Naive thymus-derived CD4-positive, alpha-beta T cell (primary cell): ENCODE measurements at regions of chr6 and their contacts with region 1.

Region 1: DNA sequence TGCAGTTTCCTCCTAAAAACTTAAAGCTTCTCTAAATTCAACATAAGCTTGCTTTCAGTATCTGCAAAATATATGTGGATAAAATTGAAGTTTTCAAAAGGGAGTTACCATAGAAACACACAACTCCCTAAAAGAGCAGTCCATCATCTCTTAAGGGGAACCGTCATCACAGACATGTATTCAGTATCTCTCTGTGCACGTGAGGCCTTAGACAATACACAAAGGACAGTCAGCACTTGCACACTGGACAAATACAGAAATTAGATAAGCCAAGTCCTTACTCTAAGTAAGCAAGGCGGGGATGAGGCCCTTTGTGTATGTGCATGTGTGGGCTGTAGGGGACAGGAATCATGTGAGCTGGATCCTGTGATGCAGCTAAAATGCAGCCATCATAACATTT is 136.6 kb downstream of the BACH2 start:
- DNase-seq: no peak
- ATAC-seq: peak; percentile 41
- H3K4me3 ChIP-seq: no peak overlapping the region
- H3K4me3 Mint-ChIP-seq: peak overlapping the region in 9 of 10 donors; percentile 3 to 73 (median 48)
- H3K27ac ChIP-seq: peak overlapping the region; percentile 28
- H3K27ac Mint-ChIP-seq: peak overlapping the region in 8 of 9 donors; percentile 84 to 94 (median 92)
- H3K4me1 ChIP-seq: peaks cover 8 to 77% of the 10 kb centered on the region in 2 donors
- H3K4me1 Mint-ChIP-seq: peaks cover 18 to 96% (median 83%) of the 10 kb centered on the region in 7 donors
- H3K27me3 ChIP-seq: no peaks in the 10 kb centered on the region
- H3K27me3 Mint-ChIP-seq: no peaks in the 10 kb centered on the region

Region 2: GRCh38 chr6:90121982-90122381 is 38.0 kb before region 1 on chr6:
- CTCF ChIA-PET with region 1: interaction called, 4 read pairs
- POLR2A ChIA-PET with region 1: interaction called, 9 read pairs
- intact Hi-C with region 1: loop called in 1 of 2 experiments (anchors 5 kb)
- DNase-seq: no peak
- ATAC-seq: peak; percentile 14
- H3K4me3 ChIP-seq: no peak overlapping the region
- H3K4me3 Mint-ChIP-seq: peak overlapping the region in 7 of 10 donors; percentile 15 to 70 (median 49)
- H3K27ac ChIP-seq: no peak overlapping the region
- H3K27ac Mint-ChIP-seq: peak overlapping the region in 8 of 9 donors; percentile 21 to 92 (median 85)
- H3K4me1 ChIP-seq: peaks cover 0 to 16% of the 10 kb centered on the region in 2 donors
- H3K4me1 Mint-ChIP-seq: peaks cover 17 to 91% (median 86%) of the 10 kb centered on the region in 7 donors
- H3K27me3 ChIP-seq: no peaks in the 10 kb centered on the region
- H3K27me3 Mint-ChIP-seq: no peaks in the 10 kb centered on the region

Region 3: GRCh38 chr6:90144396-90144795 is 15.6 kb before region 1 on chr6:
- CTCF ChIA-PET with region 1: interaction called, 3 read pairs
- POLR2A ChIA-PET with region 1: interaction called, 5 read pairs
- intact Hi-C with region 1: loop called in 1 of 2 experiments (anchors 1 kb)
- DNase-seq: peak in 1 of 9 donors; percentile 57
- ATAC-seq: no peak
- H3K4me3 ChIP-seq: no peak overlapping the region
- H3K4me3 Mint-ChIP-seq: peak overlapping the region in 3 of 10 donors; percentile 14 to 32 (median 15)
- H3K27ac ChIP-seq: no peak overlapping the region
- H3K27ac Mint-ChIP-seq: peak overlapping the region in 6 of 9 donors; percentile 32 to 74 (median 64)
- H3K4me1 ChIP-seq: peaks cover 0 to 68% of the 10 kb centered on the region in 2 donors
- H3K4me1 Mint-ChIP-seq: peaks cover 42 to 98% (median 86%) of the 10 kb centered on the region in 7 donors
- H3K27me3 ChIP-seq: no peaks in the 10 kb centered on the region
- H3K27me3 Mint-ChIP-seq: no peaks in the 10 kb centered on the region

Region 4: GRCh38 chr6:90319044-90319443 is 159.0 kb after region 1 on chr6:
- CTCF ChIA-PET with region 1: no interaction called
- POLR2A ChIA-PET with region 1: no interaction called
- intact Hi-C with region 1: no loop called
- DNase-seq: no peak
- ATAC-seq: peak; percentile 24
- H3K4me3 ChIP-seq: no peak overlapping the region
- H3K4me3 Mint-ChIP-seq: no peak overlapping the region
- H3K27ac ChIP-seq: no peak overlapping the region
- H3K27ac Mint-ChIP-seq: no peak overlapping the region
- H3K4me1 ChIP-seq: no peaks in the 10 kb centered on the region
- H3K4me1 Mint-ChIP-seq: peaks cover 0 to 18% (median 11%) of the 10 kb centered on the region in 7 donors
- H3K27me3 ChIP-seq: no peaks in the 10 kb centered on the region
- H3K27me3 Mint-ChIP-seq: peaks cover 0 to 11% (median 0%) of the 10 kb centered on the region in 5 donors